ENCODE measurements at regions of chr6 and their contacts with region 1.

Region 1: DNA sequence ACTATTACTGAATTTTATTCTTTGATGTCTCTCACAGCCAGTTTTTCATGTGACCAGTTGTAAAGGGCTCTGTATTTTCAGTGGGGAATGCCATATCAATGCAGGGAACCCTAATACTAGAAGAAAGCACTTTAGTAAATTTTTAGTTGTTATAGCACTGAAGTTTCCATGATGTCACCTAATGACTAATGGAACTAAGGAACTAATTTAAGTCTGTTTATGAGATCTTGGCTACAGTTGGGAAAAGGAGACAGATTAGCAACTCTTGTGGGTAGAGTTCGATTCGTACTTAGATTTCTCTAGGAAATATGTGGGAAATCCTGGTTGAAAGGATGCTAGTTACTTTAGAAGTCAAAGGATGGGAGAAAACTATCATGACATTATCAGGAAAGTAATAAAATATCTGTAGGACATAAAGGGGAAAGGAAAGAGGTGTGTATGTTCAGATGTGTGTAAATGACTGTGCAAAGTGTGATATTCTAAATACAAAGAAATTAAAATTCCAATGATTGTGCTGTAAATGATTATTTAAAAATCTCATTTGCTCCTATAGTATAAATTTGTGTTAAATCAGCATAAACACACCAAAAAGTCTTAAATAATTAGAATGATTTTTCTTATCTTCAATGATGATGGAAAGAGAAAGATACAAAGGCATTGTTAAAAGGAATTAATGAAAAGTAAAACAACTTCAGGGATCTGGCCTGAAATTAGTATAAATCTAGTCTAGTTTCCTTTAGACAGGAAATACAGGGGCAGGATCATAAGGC is 103.4 kb downstream of the LRRC1 start:
- DNase-seq: peak; percentile 45
- H3K4me3 ChIP-seq: no peak overlapping the region
- H3K27ac ChIP-seq: no peak overlapping the region
- H3K4me1 ChIP-seq: peaks cover 20% of the 10 kb centered on the region
- H3K27me3 ChIP-seq: no peaks in the 10 kb centered on the region
- CTCF ChIP-seq: no peak
- POLR2A ChIP-seq: no peak

Region 2: DNA sequence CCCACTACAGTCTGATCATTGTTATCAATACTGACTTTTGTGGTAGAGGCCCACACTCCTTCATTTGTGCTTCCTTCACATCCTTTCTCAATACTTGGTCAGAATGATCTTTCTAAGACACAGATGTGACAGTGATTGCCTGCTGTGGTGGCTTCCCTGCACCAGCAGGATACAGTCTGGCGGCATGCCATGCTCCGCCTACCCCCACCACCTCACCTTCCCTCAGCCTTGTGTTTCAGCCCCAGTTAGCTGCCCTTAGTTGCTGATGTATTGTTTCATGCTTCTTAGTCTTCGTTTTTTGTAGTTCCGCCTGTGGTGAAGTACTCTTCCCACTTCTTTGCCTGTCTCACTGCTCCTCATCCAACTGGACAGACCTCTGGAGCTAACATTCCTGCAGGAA is 92.5 kb before region 1 on chr6:
- CTCF ChIA-PET with region 1: no interaction called
- POLR2A ChIA-PET with region 1: no interaction called
- dilution Hi-C with region 1: no loop called
- intact Hi-C with region 1: no loop called
- DNase-seq: no peak
- H3K4me3 ChIP-seq: no peak overlapping the region
- H3K27ac ChIP-seq: no peak overlapping the region
- H3K4me1 ChIP-seq: peaks cover 4% of the 10 kb centered on the region
- H3K27me3 ChIP-seq: no peaks in the 10 kb centered on the region
- CTCF ChIP-seq: no peak
- POLR2A ChIP-seq: no peak

Region 3: DNA sequence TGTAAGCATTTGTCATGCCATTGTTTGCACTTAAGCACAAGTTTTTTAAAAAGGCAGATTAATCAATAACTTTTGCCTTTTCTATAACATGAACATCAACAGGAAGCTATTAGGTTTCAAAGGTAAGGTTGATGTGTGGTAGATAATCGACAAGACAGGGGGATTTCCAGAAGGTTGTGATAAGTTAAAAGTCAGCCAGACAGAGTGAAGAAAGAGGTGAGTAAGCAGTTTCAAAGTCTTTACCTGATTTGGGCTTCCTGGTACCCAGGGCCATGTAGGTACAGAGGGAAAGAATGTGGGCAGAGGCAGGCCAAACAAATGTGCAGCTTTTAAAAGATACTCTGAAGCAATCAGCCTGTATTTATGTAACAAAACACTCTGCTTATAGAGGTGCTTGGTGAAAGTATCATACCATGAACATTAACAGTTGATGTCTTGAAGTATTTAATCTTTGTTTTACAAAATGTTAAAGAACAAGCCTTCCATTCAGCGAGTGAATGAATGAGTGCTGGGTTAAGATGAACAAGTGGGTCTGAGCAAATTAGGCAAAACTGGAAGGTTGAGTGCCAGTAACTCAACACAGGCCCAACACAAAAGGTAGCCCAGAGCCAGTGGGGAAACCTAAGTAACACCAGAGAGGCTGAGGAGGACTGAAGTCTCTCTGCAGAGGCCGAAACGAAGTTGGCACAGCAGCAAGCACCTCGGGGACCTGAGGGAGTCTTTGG is 43.2 kb before region 1 on chr6:
- CTCF ChIA-PET with region 1: no interaction called
- POLR2A ChIA-PET with region 1: no interaction called
- dilution Hi-C with region 1: no loop called
- intact Hi-C with region 1: loop called (anchors 1 kb)
- DNase-seq: no peak
- H3K4me3 ChIP-seq: no peak overlapping the region
- H3K27ac ChIP-seq: no peak overlapping the region
- H3K4me1 ChIP-seq: peaks cover 30% of the 10 kb centered on the region
- H3K27me3 ChIP-seq: no peaks in the 10 kb centered on the region
- CTCF ChIP-seq: no peak
- POLR2A ChIP-seq: no peak

Region 4: GRCh38 chr6:53879608-53880007 is 18.6 kb before region 1 on chr6:
- CTCF ChIA-PET with region 1: interaction called, 7 read pairs
- POLR2A ChIA-PET with region 1: no interaction called
- dilution Hi-C with region 1: no loop called
- intact Hi-C with region 1: loop called (anchors 2 kb)
- DNase-seq: no peak
- H3K4me3 ChIP-seq: no peak overlapping the region
- H3K27ac ChIP-seq: no peak overlapping the region
- H3K4me1 ChIP-seq: no peaks in the 10 kb centered on the region
- H3K27me3 ChIP-seq: no peaks in the 10 kb centered on the region
- CTCF ChIP-seq: no peak
- POLR2A ChIP-seq: no peak

Region 5: DNA sequence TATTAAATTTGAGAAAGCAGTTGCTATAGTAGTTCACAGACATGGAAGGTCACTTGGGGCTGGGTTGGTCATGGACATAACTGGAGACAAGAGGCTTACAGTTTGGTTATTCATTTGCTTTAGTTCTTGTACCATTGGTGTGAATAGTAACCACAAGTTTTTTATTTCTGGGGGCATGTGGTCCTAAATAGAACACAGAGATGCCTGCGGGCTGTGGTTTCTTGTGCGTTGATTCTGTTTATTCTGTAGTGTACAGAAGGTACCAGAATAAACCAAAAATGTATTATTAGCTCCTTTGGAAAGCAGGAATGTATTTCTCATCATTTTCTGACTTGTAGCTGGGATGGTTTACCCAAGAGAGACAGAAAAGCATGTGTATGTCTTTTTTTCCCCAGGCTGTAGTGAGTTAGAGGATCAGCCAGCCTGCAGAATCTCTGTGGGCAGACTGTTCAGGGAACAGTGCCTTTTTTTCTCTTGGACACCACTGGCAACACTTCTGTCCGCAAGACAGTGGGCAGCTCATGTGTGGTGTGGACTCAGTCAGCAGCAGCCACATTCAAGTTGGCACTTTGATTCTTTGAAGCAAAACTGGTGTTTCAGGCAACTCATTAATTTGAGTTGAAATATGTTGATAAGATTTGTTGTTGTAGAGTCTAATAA is 18.7 kb after region 1 on chr6:
- CTCF ChIA-PET with region 1: no interaction called
- POLR2A ChIA-PET with region 1: no interaction called
- dilution Hi-C with region 1: no loop called
- intact Hi-C with region 1: no loop called
- DNase-seq: no peak
- H3K4me3 ChIP-seq: no peak overlapping the region
- H3K27ac ChIP-seq: no peak overlapping the region
- H3K4me1 ChIP-seq: no peaks in the 10 kb centered on the region
- H3K27me3 ChIP-seq: no peaks in the 10 kb centered on the region
- CTCF ChIP-seq: no peak
- POLR2A ChIP-seq: no peak

Region 6: DNA sequence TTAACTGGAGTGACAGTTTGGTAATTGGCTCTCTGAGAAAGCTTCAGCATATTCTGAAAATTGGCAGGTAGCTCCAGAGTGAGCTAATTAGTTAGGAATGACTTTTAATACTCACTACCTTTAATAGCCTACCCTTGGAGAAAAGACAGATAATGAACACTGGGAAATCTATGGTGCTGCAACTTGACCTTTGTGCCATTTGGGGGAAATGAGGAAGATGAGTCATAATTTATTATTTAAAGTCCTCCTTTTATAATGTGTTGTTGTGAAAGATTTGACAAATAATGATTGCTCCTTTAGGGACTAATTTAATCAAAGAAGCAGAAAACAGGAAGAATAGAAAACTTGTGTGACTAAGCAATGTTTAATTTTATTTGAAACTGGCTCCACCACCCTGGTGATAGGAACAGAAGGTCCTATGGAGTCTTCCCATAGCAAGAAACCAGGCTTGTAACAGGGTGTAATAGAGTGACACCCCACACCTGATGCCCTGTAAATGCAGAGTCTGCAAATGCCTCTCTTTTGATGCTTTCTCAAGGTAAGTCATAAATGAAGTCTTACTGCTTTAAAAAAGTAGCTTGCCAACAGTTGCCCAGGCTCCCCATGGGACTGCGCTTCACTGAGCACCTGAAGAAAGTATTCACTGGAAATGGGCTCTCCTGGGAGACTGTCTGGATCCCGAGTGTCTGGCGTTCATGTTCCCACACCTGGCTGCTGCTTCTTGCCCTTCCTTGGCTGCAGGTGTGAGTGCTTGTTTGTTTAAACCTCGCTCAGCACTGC is 31.0 kb after region 1 on chr6:
- CTCF ChIA-PET with region 1: interaction called, 3 read pairs
- POLR2A ChIA-PET with region 1: no interaction called
- dilution Hi-C with region 1: no loop called
- intact Hi-C with region 1: loop called (anchors 1 kb)
- DNase-seq: peak; percentile 94
- H3K4me3 ChIP-seq: no peak overlapping the region
- H3K27ac ChIP-seq: peak overlapping the region; percentile 71
- H3K4me1 ChIP-seq: peaks cover 42% of the 10 kb centered on the region
- H3K27me3 ChIP-seq: no peaks in the 10 kb centered on the region
- CTCF ChIP-seq: no peak
- POLR2A ChIP-seq: no peak

Measured in endothelial cell of umbilical vein (primary cell).